ENCODE measurements at regions of chr3 and their contacts with region 1.

Region 1: GRCh38 chr3:49939858-49940666 is at the start of gene RBM6:
- DNase-seq: peak; percentile 97
- ATAC-seq: peak; percentile 98
- H3K4me3 Mint-ChIP-seq: peak within 1 kb of the TSS; percentile 98
- H3K27ac Mint-ChIP-seq: peak within 1 kb of the TSS; percentile 97
- H3K4me1 Mint-ChIP-seq: peaks cover 8% of the 10 kb centered on the region
- H3K27me3 Mint-ChIP-seq: no peaks in the 10 kb centered on the region; the same call in 1 of the 2 replicates
- CTCF ChIP-seq: no peak
- total RNA-seq, gene RBM6: 115 to 122 TPM (median 118 TPM) in 3 replicates

Region 2: DNA sequence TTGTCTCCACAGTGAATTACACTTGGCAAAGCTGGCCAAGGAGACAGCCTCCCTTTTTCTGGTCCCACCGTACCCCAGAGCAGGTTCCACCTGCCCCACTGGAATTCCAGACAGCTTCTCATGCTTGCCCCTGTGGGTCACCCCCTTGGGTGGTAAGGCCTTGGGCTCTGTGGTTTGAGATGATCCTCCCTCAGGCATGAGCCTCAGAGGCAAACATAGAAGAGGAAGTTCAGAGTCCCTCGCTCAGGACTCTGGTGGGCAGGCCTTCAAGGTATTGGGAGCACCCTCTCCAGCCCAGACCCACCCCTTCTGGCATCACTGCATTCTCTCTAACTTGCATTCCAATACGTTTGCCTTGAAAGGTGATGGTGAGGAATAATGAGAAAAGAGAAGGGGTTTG is 108.7 kb before region 1 on chr3:
- CTCF ChIA-PET with region 1: no interaction called
- POLR2A ChIA-PET with region 1: no interaction called
- DNase-seq: no peak
- ATAC-seq: no peak
- H3K4me3 Mint-ChIP-seq: no peak overlapping the region
- H3K27ac Mint-ChIP-seq: no peak overlapping the region
- H3K4me1 Mint-ChIP-seq: no peaks in the 10 kb centered on the region
- H3K27me3 Mint-ChIP-seq: no peaks in the 10 kb centered on the region
- CTCF ChIP-seq: no peak

Region 3: DNA sequence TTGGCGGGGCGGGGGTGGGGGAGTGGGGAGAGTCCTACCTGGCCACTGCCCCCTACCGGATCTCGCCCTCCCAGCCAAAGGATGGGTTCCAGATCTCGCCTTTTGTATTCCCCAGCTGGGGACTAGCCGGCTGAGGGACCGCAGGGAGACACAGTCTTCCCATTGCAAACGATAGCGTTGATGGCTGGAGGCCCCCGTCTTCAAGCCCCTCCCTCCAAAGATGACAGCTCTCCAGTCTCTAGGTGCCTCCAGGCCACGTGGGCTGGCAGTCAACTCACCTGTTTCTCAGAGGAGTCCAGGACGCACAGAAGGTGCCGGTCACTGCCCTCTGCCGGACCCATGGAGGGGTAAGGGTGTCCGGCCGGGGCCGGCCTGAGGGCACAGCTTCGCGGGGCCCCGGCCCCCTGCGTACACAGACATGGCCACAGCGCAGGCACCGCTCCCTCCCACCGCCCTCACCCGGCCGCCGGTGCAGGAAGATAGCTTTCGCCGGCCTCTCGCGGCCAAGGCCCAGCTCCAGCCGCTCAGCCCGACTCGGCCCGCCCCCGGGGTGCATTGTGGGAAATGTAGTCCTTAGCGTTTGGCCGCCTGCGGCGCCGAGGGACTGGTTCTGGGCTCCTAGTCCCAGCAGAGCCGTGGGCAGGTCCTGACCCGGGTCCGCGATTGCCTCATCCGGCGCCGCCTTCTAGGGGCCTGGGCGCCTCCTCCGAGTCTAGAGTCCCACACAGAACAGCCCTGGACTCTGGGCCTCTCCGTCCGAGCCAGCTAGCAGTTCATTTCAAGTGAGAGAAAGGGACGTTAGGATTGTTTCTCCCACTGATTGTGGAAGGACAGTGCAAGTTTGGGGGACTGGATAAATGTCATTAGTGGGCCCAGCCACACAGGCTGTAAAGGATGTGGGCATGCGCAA is 10.5 kb before region 1 on chr3 and contains the start of gene MON1A:
- CTCF ChIA-PET with region 1: interaction called, 42 read pairs
- POLR2A ChIA-PET with region 1: interaction called, 31 read pairs
- DNase-seq: peak; percentile 99
- ATAC-seq: peak; percentile 87
- H3K4me3 Mint-ChIP-seq: peak within 1 kb of the TSS; percentile 90
- H3K27ac Mint-ChIP-seq: peak within 1 kb of the TSS; percentile 98
- H3K4me1 Mint-ChIP-seq: peaks cover 25% of the 10 kb centered on the region
- H3K27me3 Mint-ChIP-seq: no peaks in the 10 kb centered on the region
- CTCF ChIP-seq: no peak
- total RNA-seq, gene MON1A: 6.6 to 8.6 TPM (median 7.0 TPM) in 3 replicates

Measured in WTC11 (cell line).